Mammary epithelial cell (primary cell): ENCODE measurements at regions of chr7 and their contacts with region 1.

Region 1: DNA sequence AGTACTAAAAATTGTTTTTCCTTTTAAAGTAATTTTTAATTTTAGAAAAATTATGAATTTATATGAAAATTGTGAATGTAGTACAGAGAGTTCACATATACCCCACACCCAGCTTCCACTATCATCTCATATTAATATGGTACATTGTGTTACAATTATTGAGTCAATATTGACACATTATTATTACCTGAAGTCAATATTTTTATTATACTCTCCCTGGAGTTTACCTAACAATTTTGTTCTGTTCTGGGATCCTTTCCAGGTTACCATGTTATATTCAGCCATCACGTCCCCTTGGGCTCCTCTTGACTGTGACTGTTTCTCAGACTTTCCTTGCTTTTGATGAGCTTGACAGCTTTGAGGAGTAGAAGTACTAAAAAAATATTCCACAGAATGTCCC is 928.8 kb upstream of the PHF14 start:
- DNase-seq: no peak
- H3K4me3 ChIP-seq: no peak overlapping the region
- H3K27ac ChIP-seq: no peak overlapping the region
- H3K4me1 ChIP-seq: no peaks in the 10 kb centered on the region
- H3K27me3 ChIP-seq: no peaks in the 10 kb centered on the region
- CTCF ChIP-seq: no peak

Region 2: GRCh38 chr7:9945879-9946278 is 99.0 kb before region 1 on chr7:
- CTCF ChIA-PET with region 1: no interaction called
- dilution Hi-C with region 1: no loop called
- in situ Hi-C with region 1: no loop called
- intact Hi-C with region 1: no loop called
- DNase-seq: no peak
- H3K4me3 ChIP-seq: no peak overlapping the region
- H3K27ac ChIP-seq: no peak overlapping the region
- H3K4me1 ChIP-seq: no peaks in the 10 kb centered on the region
- H3K27me3 ChIP-seq: no peaks in the 10 kb centered on the region
- CTCF ChIP-seq: no peak

Region 3: GRCh38 chr7:10085231-10085630 is 40.4 kb after region 1 on chr7:
- CTCF ChIA-PET with region 1: no interaction called
- dilution Hi-C with region 1: loop called (anchors 5 kb)
- in situ Hi-C with region 1: no loop called
- intact Hi-C with region 1: no loop called
- DNase-seq: no peak
- H3K4me3 ChIP-seq: no peak overlapping the region
- H3K27ac ChIP-seq: no peak overlapping the region
- H3K4me1 ChIP-seq: no peaks in the 10 kb centered on the region
- H3K27me3 ChIP-seq: no peaks in the 10 kb centered on the region
- CTCF ChIP-seq: no peak